Heart right ventricle (tissue), 16 donors: ENCODE measurements at regions of chr2 and their contacts with region 1.

Region 1: GRCh38 chr2:187499941-187500532 is 52.0 kb upstream of the CALCRL start:
- DNase-seq: peak; percentile 27 to 57
- ATAC-seq: peak in 7 of 8 donors; percentile 58 to 86 (median 75)
- H3K4me3 ChIP-seq: no peak overlapping the region
- H3K27ac ChIP-seq: no peak overlapping the region
- H3K4me1 ChIP-seq: peaks cover 0 to 19% (median 6%) of the 10 kb centered on the region in 9 donors
- H3K27me3 ChIP-seq: no peaks in the 10 kb centered on the region
- CTCF ChIP-seq: peak; percentile 71 to 94 (median 83)

Region 2: GRCh38 chr2:187527262-187527661 is 27.2 kb after region 1 on chr2:
- intact Hi-C with region 1: no loop called
- DNase-seq: no peak
- ATAC-seq: peak in 4 of 8 donors; percentile 34 to 64 (median 50)
- H3K4me3 ChIP-seq: no peak overlapping the region
- H3K27ac ChIP-seq: peak overlapping the region in 4 of 10 donors; percentile 5 to 53 (median 47)
- H3K4me1 ChIP-seq: peaks cover 0 to 38% (median 9%) of the 10 kb centered on the region in 9 donors
- H3K27me3 ChIP-seq: no peaks in the 10 kb centered on the region
- CTCF ChIP-seq: no peak

Region 3: DNA sequence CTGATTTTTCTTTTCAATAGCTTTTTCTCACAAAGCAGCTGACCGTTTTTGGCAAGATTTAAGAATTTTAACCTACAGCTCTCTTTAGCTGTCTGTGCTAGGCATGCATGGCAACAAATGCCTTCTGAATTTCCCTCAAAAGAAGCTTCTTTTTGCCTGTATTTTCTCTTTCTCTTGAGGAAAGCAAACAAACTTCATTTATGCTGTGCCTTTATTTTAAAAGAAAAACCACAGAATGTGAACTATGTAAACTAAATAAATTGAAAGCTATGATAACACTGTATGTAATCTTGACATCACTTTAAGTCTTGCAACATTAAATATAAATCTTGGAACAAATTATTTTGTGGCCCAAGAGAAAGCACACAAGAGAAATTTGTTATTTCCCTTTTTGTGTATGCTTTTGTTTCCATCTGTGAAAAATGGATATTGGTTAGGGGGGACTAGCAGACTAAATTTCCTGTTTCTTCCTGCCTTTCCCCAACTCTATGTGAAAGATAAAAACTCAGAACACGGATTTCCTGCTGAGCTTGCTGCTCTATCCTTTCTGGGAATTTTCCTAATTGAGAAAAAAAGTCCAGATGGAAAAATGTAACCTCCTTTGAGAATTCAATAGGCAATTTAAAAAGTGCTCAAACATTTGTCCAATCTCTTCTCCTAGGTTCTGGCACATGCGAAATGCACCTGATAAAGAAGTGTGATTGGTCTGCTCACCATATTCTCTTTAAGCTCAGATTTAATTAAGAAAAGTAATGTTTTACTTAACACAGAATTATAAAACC is 75.1 kb after region 1 on chr2:
- intact Hi-C with region 1: loop called (anchors 2 to 5 kb)
- DNase-seq: no peak
- ATAC-seq: peak in 3 of 8 donors; percentile 11 to 61 (median 54)
- H3K4me3 ChIP-seq: no peak overlapping the region
- H3K27ac ChIP-seq: peak overlapping the region in 6 of 10 donors; percentile 15 to 54 (median 32)
- H3K4me1 ChIP-seq: peaks cover 0 to 26% (median 11%) of the 10 kb centered on the region in 9 donors
- H3K27me3 ChIP-seq: no peaks in the 10 kb centered on the region
- CTCF ChIP-seq: no peak

Region 4: GRCh38 chr2:187842978-187843847 is 343.2 kb after region 1 on chr2:
- intact Hi-C with region 1: loop called in 5 of 10 experiments (anchors 5 to 10 kb)
- DNase-seq: no peak
- ATAC-seq: no peak
- H3K4me3 ChIP-seq: no peak overlapping the region
- H3K27ac ChIP-seq: no peak overlapping the region
- H3K4me1 ChIP-seq: no peaks in the 10 kb centered on the region
- H3K27me3 ChIP-seq: no peaks in the 10 kb centered on the region
- CTCF ChIP-seq: peak; percentile 22 to 65 (median 50)

Region 5: GRCh38 chr2:188512456-188512855 is 1012.4 kb after region 1 on chr2:
- intact Hi-C with region 1: loop called in 5 of 10 experiments (anchors 5 to 10 kb)
- DNase-seq: no peak
- ATAC-seq: peak in 1 of 8 donors; percentile 47
- H3K4me3 ChIP-seq: no peak overlapping the region
- H3K27ac ChIP-seq: no peak overlapping the region
- H3K4me1 ChIP-seq: no peaks in the 10 kb centered on the region
- H3K27me3 ChIP-seq: no peaks in the 10 kb centered on the region
- CTCF ChIP-seq: peak in 7 of 9 donors; percentile 41 to 70 (median 62)